Heart left ventricle (tissue), 16 donors: ENCODE measurements at regions of chr6 and their contacts with region 1.

Region 1: DNA sequence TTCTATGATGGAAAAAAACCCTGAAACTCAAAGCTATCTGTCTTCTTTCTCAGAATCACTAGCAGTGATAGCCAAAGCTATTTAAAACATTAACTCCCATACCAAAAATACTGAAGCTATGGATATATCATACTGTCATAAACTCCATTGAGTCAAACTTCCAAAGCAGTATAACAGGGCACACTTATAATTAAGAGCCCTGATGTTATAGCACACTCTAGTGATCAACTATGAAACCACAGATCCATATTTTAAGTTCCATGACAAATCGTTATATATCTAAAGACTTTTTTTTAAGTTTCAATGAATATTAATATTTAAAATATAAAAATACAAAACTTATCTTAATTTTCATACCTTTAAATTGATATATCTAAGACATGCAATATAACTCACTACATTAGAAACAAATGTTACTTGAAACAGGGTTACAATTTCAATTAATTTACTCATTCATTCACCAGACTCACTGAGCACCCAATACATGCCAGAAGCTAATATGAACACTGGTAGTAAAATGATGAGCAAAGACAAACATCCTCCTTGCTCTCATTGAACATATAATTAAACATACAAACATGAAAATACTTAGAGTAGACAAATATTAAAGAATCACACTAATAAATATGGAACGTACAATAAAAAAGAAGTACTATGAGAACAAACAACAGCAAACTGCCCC is 69.3 kb downstream of the IBTK start:
- DNase-seq: no peak
- ATAC-seq: peak; percentile 55 to 87 (median 85)
- H3K4me3 ChIP-seq: no peak overlapping the region
- H3K27ac ChIP-seq: no peak overlapping the region
- H3K4me1 ChIP-seq: peaks cover 0 to 8% (median 0%) of the 10 kb centered on the region in 12 donors
- H3K27me3 ChIP-seq: no peaks in the 10 kb centered on the region
- CTCF ChIP-seq: peak; percentile 34 to 80 (median 63)
- POLR2A ChIP-seq: no peak

Region 2: DNA sequence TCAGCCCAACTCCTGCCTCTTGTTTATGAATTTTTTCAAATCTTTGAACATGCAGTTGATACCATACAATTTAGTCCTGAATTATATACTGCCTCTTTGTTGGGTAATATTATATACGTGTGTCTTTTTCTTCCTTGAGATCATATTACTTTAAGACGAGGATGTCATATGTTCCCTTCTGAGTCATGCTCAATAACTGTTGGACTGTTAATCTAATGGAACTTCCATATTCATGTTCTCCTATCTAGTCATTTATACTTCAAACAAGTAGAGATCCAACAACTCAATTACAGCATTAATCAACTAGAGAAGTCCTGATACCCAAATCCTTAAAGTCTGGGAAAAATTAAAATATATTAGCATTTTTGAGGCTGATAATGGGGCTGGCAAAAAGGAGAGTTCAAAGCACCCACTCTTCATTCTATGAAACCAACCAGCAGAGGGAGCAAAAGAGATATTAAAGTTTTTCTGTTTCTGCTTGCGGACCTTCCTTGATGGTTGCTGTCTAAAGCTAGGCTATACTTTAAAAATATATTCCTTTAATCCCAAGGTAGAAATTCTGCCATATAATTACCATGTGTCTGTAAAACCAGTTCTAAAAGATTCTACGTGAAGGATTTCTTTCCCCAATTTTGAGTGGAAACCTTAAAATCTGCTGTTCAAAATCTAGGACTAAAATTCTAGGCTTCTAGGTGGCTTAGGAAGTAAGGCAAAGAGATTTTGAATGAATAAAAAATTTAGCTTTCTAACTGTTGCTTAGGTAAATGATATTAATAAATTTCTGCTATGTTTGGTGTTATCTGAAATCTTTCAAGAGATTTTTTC is 1572.8 kb before region 1 on chr6:
- intact Hi-C with region 1: loop called in 3 of 10 experiments (anchors 10 kb)
- DNase-seq: no peak
- ATAC-seq: peak in 2 of 4 donors; percentile 48 to 70
- H3K4me3 ChIP-seq: no peak overlapping the region
- H3K27ac ChIP-seq: no peak overlapping the region
- H3K4me1 ChIP-seq: peaks cover 0 to 25% (median 7%) of the 10 kb centered on the region in 12 donors
- H3K27me3 ChIP-seq: no peaks in the 10 kb centered on the region
- CTCF ChIP-seq: peak; percentile 28 to 70 (median 52)
- POLR2A ChIP-seq: no peak

Region 3: GRCh38 chr6:81894788-81895271 is 283.4 kb before region 1 on chr6:
- intact Hi-C with region 1: loop called in 2 of 10 experiments (anchors 10 kb)
- DNase-seq: peak; percentile 59 to 86 (median 70)
- ATAC-seq: peak; percentile 91 to 97 (median 92)
- H3K4me3 ChIP-seq: peak overlapping the region in 7 of 12 donors; percentile 9 to 44 (median 22)
- H3K27ac ChIP-seq: peak overlapping the region; percentile 50 to 87 (median 80)
- H3K4me1 ChIP-seq: peaks cover 0 to 55% (median 13%) of the 10 kb centered on the region in 12 donors
- H3K27me3 ChIP-seq: no peaks in the 10 kb centered on the region
- CTCF ChIP-seq: no peak
- POLR2A ChIP-seq: no peak

Region 4: DNA sequence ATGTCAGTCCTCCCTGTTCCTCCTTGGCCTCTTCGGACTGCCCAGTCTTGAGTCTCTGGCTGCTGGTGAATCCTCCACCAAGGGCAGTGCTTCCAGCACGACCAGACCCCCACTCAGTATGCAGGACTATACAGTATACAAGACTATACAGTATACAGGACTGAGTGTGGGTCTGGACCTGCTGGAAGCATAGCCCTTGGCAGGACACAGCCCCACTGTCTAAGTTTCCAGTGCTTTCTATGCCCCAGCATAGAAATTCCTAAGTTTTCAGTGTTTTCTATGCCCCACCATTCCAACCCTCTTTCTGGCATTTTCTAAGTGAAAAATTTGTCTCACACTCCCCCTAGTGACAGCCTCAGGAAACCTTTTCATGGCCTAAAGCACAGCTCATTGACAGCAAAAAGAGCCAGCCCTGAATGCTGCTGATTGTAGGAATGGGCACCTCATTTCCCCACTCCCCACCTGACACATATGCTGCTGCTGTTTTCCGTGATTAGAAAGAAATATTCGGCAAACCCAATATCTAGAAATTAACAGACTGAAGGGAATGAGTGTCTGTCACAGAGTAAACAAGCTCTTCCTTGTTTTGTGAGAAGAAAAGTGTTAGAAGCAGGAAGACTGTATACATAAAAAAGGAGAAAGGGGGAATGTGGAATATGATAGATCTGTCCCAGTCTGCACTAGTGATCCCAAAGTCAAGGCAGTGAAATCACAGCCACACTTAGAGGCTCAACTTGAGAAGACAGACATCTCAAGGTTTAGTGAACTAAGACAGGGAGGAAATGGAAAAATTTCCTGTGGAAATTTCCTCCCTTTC is 137.6 kb before region 1 on chr6:
- intact Hi-C with region 1: loop called in 1 of 10 experiments (anchors 10 kb)
- DNase-seq: peak in 2 of 5 donors; percentile 31
- ATAC-seq: peak; percentile 38 to 84 (median 76)
- H3K4me3 ChIP-seq: no peak overlapping the region
- H3K27ac ChIP-seq: peak overlapping the region in 3 of 12 donors; percentile 3 to 48 (median 17)
- H3K4me1 ChIP-seq: peaks cover 0 to 16% (median 0%) of the 10 kb centered on the region in 12 donors
- H3K27me3 ChIP-seq: no peaks in the 10 kb centered on the region
- CTCF ChIP-seq: peak; percentile 45 to 77 (median 64)
- POLR2A ChIP-seq: no peak

Region 5: DNA sequence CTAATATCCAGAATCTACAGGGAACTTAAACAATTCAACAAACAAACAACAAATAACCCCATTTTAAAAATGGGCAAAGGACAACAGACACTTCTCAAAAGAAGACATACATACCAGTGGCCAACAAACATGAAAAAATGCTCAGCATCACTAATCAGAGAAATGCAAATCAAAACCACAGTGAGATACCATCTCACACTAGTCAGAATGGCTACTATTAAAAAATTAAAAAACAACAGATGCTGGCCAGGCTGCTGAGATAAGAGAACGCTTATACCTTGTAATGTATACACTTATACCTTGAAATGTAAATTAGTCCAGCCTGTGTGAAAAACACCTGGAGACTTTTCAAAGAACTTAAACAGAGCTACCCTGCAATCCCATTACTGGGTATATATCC is 97.5 kb before region 1 on chr6:
- intact Hi-C with region 1: loop called in 5 of 10 experiments (anchors 5 to 10 kb)
- DNase-seq: no peak
- ATAC-seq: no peak
- H3K4me3 ChIP-seq: no peak overlapping the region
- H3K27ac ChIP-seq: no peak overlapping the region
- H3K4me1 ChIP-seq: peaks cover 0 to 15% (median 3%) of the 10 kb centered on the region in 12 donors
- H3K27me3 ChIP-seq: no peaks in the 10 kb centered on the region
- CTCF ChIP-seq: no peak
- POLR2A ChIP-seq: no peak